K562 (cell line): ENCODE measurements at regions of chr6 and their contacts with region 1.

Region 1: GRCh38 chr6:37018198-37019064 is 13.0 kb downstream of the FGD2 start:
- DNase-seq: peak; percentile 88 to 93 (median 90)
- ATAC-seq: peak; percentile 97
- H3K4me3 ChIP-seq: no peak overlapping the region
- H3K27ac ChIP-seq: peak overlapping the region; percentile 25; the same call in 1 of the 3 replicates
- H3K4me1 ChIP-seq: peaks cover 13 to 26% of the 10 kb centered on the region in 2 experiments
- H3K27me3 ChIP-seq: no peaks in the 10 kb centered on the region; a peak in 1 of 5 replicates
- CTCF ChIP-seq: peak; percentile 99 to 100 (median 99)
- EP300 ChIP-seq: no peak
- POLR2A ChIP-seq: no peak
- RAD21 ChIP-seq: peak; percentile 92 to 98

Region 2: GRCh38 chr6:36765594-36766398 is 252.6 kb before region 1 on chr6:
- CTCF ChIA-PET with region 1: interaction called, 108 read pairs
- POLR2A ChIA-PET with region 1: interaction called, 9 read pairs
- in situ Hi-C with region 1: no loop called
- intact Hi-C with region 1: loop called (anchors 1 kb)
- DNase-seq: peak; percentile 88 to 92 (median 91)
- ATAC-seq: peak; percentile 97
- H3K4me3 ChIP-seq: no peak overlapping the region
- H3K27ac ChIP-seq: no peak overlapping the region
- H3K4me1 ChIP-seq: peaks cover 15 to 19% of the 10 kb centered on the region in 2 experiments; a peak in 3 of 5 replicates
- H3K27me3 ChIP-seq: peaks cover 20 to 33% of the 10 kb centered on the region in 2 experiments; a peak in 4 of 5 replicates
- CTCF ChIP-seq: peak; percentile 97 to 99 (median 99)
- EP300 ChIP-seq: peak; percentile 16; the same call in 1 of the 2 replicates
- POLR2A ChIP-seq: no peak
- RAD21 ChIP-seq: peak; percentile 99 to 100

Region 3: DNA sequence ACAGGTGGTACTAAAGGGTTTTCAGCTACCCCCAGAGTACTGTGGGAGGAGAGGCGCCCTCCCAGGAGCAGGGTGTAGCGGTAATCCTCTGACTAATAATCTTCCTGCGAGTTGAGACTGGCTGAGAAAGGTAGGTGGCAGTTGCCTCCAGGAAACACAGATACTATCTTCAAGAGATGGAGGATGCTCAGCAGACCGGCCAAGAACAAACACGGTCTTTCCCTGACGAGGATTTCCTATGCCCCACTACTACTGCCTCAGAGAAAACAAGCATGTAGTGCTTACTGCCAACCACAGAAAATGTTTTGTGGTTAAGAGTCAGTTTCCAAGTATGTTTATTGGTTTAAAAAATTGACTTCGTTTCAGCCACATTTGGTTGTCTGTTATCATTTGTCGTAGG is 105.8 kb before region 1 on chr6:
- CTCF ChIA-PET with region 1: no interaction called
- POLR2A ChIA-PET with region 1: no interaction called
- in situ Hi-C with region 1: no loop called
- intact Hi-C with region 1: loop called (anchors 10 kb)
- DNase-seq: no peak
- ATAC-seq: peak; percentile 32; the same call in 2 of the 3 replicates
- H3K4me3 ChIP-seq: no peak overlapping the region
- H3K27ac ChIP-seq: no peak overlapping the region
- H3K4me1 ChIP-seq: peaks cover 0 to 10% of the 10 kb centered on the region in 2 experiments; a peak in 3 of 5 replicates
- H3K27me3 ChIP-seq: no peaks in the 10 kb centered on the region
- CTCF ChIP-seq: no peak
- EP300 ChIP-seq: no peak
- POLR2A ChIP-seq: no peak
- RAD21 ChIP-seq: no peak

Region 4: DNA sequence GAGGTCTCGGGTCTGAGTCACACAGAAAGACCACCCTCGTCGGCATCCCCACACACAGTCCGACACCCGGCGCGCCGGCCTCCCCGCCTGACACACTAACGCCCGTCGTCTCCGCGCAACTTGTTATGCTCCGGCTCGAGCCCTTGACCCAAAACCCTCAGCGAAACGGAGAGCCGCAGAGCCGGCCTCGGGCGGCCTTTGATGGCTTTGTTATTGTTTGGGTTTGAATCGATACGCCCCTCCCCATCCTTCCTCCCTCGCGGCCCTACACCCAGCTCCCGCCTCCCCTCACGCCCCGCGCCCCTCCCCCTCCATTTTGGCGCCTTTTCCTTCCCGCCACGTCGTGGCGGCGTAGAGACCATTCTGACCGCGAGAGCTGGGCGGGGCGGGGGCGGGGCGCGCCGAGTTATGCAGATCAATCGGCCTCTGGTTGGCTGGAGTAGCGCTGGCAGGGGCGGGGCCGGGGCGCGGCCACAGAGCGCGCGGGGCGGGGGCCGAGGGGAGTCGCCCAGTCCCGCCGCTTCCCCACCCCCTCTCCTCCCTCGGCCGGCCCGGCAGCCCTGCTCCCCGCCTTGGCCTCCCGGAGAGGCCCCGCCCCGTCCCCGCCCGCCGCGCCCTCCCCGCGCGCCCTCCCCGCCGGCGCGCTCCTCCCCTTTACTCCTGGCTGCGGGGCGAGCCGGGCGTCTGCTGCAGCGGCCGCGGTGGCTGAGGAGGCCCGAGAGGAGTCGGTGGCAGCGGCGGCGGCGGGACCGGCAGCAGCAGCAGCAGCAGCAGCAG is 151.3 kb after region 1 on chr6 and contains the start of gene PIM1:
- CTCF ChIA-PET with region 1: interaction called, 77 read pairs
- POLR2A ChIA-PET with region 1: interaction called, 5 read pairs
- in situ Hi-C with region 1: loop called (anchors 10 kb)
- intact Hi-C with region 1: no loop called
- DNase-seq: peak; percentile 98 to 100 (median 99)
- ATAC-seq: peak; percentile 79
- H3K4me3 ChIP-seq: peak within 1 kb of the TSS; percentile 97
- H3K27ac ChIP-seq: peak within 1 kb of the TSS; percentile 91
- H3K4me1 ChIP-seq: peaks cover 7 to 29% of the 10 kb centered on the region in 2 experiments; a peak in 4 of 5 replicates
- H3K27me3 ChIP-seq: no peaks in the 10 kb centered on the region
- CTCF ChIP-seq: peak in 1 of 3 experiments; percentile 10; a peak in 2 of 6 replicates
- EP300 ChIP-seq: peak; percentile 51
- POLR2A ChIP-seq: peak; percentile 51; the same call in 1 of the 2 replicates
- RAD21 ChIP-seq: peak; percentile 2 to 12; a peak in 3 of 4 replicates
- polyA plus RNA-seq, gene PIM1: 19.0 to 62.4 TPM

Region 5: GRCh38 chr6:37324131-37325033 is 306.0 kb after region 1 on chr6:
- CTCF ChIA-PET with region 1: interaction called, 10 read pairs
- POLR2A ChIA-PET with region 1: no interaction called
- in situ Hi-C with region 1: loop called (anchors 5 kb)
- intact Hi-C with region 1: no loop called
- DNase-seq: no peak
- ATAC-seq: no peak
- H3K4me3 ChIP-seq: no peak overlapping the region
- H3K27ac ChIP-seq: no peak overlapping the region
- H3K4me1 ChIP-seq: no peaks in the 10 kb centered on the region; a peak in 1 of 5 replicates
- H3K27me3 ChIP-seq: no peaks in the 10 kb centered on the region
- CTCF ChIP-seq: no peak
- EP300 ChIP-seq: no peak
- POLR2A ChIP-seq: no peak
- RAD21 ChIP-seq: no peak

Region 6: DNA sequence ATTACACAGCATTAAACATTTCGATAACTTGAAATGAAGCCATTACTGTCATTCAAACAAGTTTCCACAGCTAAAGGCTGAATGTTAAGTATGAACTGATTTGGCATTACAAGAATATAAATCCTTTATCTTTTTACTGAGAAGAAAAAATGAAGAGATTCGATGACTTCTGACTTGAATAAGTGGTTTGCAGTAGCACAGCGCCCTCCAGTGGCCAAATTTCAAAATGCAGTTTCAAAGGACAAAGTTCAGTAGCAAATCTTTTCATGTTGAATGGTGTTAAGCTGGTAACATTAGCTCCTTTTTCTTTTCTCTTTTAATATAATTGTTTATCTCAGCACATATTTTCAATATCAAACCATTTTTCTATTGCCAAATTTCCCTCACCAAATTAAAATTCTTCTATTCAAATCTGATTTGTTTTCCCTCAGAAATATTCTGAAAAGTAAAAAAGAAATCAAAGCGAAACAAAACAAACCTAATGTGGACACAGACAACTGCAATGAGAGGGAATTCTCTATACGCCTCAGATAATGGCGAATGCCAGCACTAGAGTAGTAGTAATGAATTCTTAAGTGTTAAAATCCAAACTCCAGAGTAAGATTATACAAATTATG is 1475.6 kb after region 1 on chr6:
- CTCF ChIA-PET with region 1: interaction called, 4 read pairs
- POLR2A ChIA-PET with region 1: no interaction called
- in situ Hi-C with region 1: loop called (anchors 25 kb)
- intact Hi-C with region 1: no loop called
- DNase-seq: peak; percentile 39 to 83 (median 56)
- ATAC-seq: peak; percentile 69
- H3K4me3 ChIP-seq: no peak overlapping the region
- H3K27ac ChIP-seq: no peak overlapping the region
- H3K4me1 ChIP-seq: no peaks in the 10 kb centered on the region
- H3K27me3 ChIP-seq: peaks cover 0 to 8% of the 10 kb centered on the region in 2 experiments; a peak in 1 of 5 replicates
- CTCF ChIP-seq: peak; percentile 69 to 97 (median 82)
- EP300 ChIP-seq: no peak
- POLR2A ChIP-seq: no peak
- RAD21 ChIP-seq: peak; percentile 94 to 96